ENCODE measurements at regions of chr12 and their contacts with region 1.

Region 1: DNA sequence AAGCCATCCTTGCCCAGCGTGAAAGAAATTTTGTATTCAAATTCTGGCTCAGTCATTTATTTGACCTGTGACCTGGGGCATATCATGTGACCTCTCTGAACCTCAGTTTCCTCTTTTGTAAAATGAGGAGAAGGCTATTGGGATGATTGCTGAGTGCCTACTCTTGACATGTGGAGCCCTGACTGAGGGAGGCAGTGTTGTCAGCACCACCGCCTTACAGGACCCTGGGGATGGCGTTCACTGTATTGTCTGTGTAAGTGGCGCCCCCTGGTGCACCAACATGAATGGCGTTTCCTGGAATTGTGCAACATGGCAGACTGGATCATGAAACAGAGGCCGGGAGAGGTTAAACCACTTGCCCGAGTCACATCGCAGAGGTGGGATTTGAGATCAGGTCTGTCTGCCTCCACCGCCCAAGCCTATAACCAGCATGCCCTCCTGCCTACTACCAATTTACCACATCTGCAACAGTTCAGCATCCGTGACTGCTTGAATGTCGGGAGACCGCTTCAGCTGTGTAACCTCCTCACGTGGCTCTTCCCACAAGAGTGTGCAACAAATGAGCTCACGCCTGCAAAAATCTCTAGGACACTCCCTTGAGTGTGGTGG is 20.1 kb upstream of the CCDC63 start:
- DNase-seq: peak; percentile 92
- H3K4me3 ChIP-seq: no peak overlapping the region
- H3K27ac ChIP-seq: no peak overlapping the region
- H3K4me1 ChIP-seq: peaks cover 4% of the 10 kb centered on the region
- CTCF ChIP-seq: peak; percentile 98

Region 2: GRCh38 chr12:110555577-110556406 is 270.9 kb before region 1 on chr12:
- CTCF ChIA-PET with region 1: no interaction called
- POLR2A ChIA-PET with region 1: no interaction called
- intact Hi-C with region 1: loop called (anchors 1 kb)
- DNase-seq: no peak
- H3K4me3 ChIP-seq: no peak overlapping the region
- H3K27ac ChIP-seq: no peak overlapping the region
- H3K4me1 ChIP-seq: peaks cover 3% of the 10 kb centered on the region
- CTCF ChIP-seq: no peak

Region 3: DNA sequence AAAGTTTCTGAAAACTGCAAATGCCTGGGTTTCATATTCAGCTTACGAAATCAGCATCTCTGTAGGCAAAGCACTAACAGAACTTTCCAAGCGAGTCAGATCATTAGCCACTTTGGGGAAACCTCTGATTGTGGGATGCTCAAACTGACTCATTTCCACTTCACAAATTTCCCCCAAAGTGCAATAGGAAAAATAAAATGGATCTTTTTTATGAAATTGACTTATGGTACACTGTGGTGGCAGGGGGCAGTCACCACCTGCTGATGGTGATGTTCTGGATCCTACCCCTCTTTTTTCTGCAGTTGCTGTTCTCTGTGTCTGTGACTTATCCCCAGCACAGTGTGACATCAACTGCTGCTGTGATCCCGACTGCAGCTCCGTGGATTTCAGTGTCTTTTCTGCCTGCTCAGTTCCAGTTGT is 207.2 kb before region 1 on chr12:
- CTCF ChIA-PET with region 1: interaction called, 3 read pairs
- POLR2A ChIA-PET with region 1: no interaction called
- intact Hi-C with region 1: loop called (anchors 1 kb)
- DNase-seq: peak; percentile 75
- H3K4me3 ChIP-seq: peak overlapping the region; percentile 59
- H3K27ac ChIP-seq: peak overlapping the region; percentile 19
- H3K4me1 ChIP-seq: peaks cover 50% of the 10 kb centered on the region
- CTCF ChIP-seq: peak; percentile 82

Region 4: GRCh38 chr12:110704748-110705147 is 121.9 kb before region 1 on chr12:
- CTCF ChIA-PET with region 1: no interaction called
- POLR2A ChIA-PET with region 1: interaction called, 3 read pairs
- intact Hi-C with region 1: loop called (anchors 1 kb)
- DNase-seq: peak; percentile 57
- H3K4me3 ChIP-seq: no peak overlapping the region
- H3K27ac ChIP-seq: no peak overlapping the region
- H3K4me1 ChIP-seq: peaks cover 4% of the 10 kb centered on the region
- CTCF ChIP-seq: peak; percentile 70

Region 5: DNA sequence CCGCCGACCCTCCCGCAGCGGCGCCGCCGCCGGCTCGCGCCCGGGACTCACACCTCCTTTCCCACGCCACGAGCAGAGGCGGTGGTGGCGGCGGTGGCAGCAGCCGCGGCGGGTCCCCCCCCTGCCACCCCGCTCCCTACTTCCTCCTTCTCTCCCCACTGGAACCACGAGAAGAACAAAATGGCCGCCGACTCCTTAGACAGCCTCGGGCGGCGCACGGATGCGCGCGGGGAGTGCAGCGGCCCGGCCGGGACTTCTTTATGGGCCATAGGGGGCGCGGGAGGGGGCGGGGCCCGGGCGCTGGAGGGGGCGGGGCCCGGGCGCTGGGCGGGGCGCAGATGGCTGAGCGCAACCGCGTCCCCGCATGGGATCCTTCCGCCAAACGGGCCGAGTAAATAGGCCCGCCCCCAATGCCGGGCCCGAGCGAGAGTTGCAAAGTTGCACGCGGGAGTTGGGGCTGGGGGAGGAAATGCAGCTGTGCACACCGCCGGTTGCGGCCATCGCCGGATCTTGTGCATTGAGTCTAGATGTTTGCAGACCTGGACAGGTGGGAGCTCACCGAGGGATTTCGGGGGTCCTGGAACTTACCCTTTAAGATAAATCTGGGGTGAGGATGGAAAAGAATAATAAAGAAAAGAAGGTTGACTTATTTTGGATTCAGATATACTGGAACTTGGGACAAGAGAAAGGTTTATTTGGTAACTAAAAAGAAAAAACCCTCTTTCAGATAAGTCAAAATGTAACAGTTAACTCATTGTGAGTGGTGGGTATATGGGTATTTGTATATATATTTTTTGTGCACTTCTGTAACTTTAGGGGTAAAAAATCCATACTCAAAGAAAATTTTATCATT is 83.8 kb before region 1 on chr12 and contains the start of gene PPP1CC:
- CTCF ChIA-PET with region 1: interaction called, 3 read pairs
- POLR2A ChIA-PET with region 1: no interaction called
- intact Hi-C with region 1: loop called (anchors 1 kb)
- DNase-seq: peak; percentile 98
- H3K4me3 ChIP-seq: peak within 1 kb of the TSS; percentile 86
- H3K27ac ChIP-seq: peak within 1 kb of the TSS; percentile 62
- H3K4me1 ChIP-seq: peaks cover 40% of the 10 kb centered on the region
- CTCF ChIP-seq: no peak
- total RNA-seq, gene PPP1CC: 140 and 146 TPM in 2 replicates

Region 6: GRCh38 chr12:110888256-110888991 is 61.7 kb after region 1 on chr12:
- CTCF ChIA-PET with region 1: no interaction called
- POLR2A ChIA-PET with region 1: no interaction called
- intact Hi-C with region 1: loop called (anchors 1 kb)
- DNase-seq: no peak
- H3K4me3 ChIP-seq: no peak overlapping the region
- H3K27ac ChIP-seq: no peak overlapping the region
- H3K4me1 ChIP-seq: no peaks in the 10 kb centered on the region
- CTCF ChIP-seq: peak; percentile 49; the same call in 1 of the 2 replicates

Measured in OCI-LY7 (cell line).